AG04449 (cell line): ENCODE measurements at regions of chr4 and their contacts with region 1.

Region 1: DNA sequence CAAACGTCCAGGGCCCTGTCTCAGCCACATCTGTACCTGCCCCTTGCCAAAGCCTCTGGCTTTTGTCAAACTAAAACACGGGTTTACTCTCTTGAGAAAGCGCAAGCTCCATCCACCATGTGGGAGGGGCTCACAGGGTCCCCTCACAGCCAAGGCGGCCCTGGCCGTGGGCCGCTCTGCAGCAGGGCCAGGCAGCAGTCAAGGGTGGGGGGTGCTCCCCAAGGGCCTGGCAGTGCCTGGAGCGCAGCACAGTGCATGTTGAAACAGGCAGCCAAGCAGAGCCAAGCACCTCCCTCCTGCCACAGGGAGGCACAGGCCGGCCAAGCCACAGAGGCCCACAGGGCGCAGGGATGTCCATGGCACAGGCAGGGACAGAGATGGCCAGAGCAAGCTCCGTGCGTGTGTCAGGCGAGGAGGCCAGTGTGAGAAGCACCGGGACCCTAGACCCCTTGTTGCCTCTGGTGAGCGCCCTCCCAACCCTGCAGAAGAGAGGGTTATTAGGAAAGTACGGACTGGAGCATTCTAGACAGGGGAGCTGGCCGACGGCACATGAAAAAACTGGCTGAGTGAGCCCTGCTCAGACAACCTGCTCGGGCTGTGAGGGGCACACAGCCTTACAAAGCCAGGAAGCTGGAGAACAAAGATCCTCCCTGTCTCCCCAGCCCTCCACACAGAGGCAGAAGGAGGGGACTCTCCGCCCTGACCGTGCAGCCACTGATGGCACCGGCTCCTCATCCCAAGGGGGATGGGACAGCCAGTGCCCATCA is 39.0 kb downstream of the FAM53A start:
- DNase-seq: no peak
- H3K4me3 ChIP-seq: no peak overlapping the region
- CTCF ChIP-seq: no peak

Region 2: DNA sequence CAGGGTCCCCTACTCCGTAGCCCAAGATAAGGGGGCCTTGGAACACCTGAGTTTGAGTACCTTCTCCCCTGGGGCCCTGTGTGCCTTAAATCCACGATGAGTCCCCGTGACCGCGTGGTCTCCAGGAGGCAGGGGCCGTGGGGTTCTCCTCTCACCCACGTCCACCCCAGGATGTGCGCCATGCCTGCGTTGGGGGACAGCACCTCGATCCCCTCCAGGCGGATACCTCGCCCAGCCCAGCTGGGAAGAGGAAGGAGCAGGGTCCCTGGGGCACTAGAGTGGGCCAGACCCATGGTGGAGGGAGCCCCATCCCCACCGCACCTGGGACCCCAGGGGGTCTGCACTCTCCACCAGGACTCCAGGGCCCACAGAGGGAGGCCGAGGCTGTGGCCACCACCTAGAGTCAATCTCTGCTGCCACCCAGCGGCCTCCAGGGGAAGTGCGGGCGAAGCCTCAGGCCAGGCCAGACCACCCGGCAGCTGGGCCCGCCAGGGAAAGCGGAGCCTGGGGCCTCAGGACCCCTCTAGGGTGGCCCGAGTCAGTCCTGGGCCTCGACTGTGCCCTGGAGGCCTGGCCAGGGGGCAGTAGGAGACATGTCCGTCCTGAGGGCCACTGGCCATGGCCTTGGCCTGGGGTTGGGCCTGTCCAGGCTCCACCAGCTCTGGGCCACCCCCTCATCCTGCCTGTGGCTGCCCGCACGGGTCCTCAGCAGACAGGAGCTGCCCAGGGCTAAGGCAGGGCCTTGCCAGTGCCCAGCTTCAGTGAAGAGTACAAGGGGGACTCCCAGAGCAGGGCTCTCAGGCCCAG is 16.0 kb before region 1 on chr4:
- CTCF ChIA-PET with region 1: interaction called, 11 read pairs
- POLR2A ChIA-PET with region 1: no interaction called
- DNase-seq: no peak
- H3K4me3 ChIP-seq: no peak overlapping the region
- CTCF ChIP-seq: peak; percentile 97

Region 3: DNA sequence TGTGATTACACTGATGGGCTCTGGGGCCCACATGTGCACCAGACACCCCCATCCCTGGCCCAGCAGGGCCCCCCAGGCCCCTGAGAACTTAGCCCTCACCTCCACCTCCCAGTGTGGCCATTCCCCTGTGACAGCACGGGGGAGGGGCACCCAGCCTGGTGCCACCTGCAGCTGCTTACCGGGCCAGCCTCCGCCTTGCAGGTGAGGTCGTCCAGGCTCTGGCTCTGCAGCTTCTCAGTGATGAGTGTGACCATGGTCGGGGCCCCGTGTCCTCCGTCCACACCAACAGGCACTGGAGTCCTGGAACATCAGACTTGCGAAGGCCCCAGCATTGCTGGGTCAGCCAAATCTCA is 23.4 kb after region 1 on chr4:
- CTCF ChIA-PET with region 1: no interaction called
- POLR2A ChIA-PET with region 1: no interaction called
- DNase-seq: no peak
- H3K4me3 ChIP-seq: no peak overlapping the region
- CTCF ChIP-seq: no peak

Region 4: DNA sequence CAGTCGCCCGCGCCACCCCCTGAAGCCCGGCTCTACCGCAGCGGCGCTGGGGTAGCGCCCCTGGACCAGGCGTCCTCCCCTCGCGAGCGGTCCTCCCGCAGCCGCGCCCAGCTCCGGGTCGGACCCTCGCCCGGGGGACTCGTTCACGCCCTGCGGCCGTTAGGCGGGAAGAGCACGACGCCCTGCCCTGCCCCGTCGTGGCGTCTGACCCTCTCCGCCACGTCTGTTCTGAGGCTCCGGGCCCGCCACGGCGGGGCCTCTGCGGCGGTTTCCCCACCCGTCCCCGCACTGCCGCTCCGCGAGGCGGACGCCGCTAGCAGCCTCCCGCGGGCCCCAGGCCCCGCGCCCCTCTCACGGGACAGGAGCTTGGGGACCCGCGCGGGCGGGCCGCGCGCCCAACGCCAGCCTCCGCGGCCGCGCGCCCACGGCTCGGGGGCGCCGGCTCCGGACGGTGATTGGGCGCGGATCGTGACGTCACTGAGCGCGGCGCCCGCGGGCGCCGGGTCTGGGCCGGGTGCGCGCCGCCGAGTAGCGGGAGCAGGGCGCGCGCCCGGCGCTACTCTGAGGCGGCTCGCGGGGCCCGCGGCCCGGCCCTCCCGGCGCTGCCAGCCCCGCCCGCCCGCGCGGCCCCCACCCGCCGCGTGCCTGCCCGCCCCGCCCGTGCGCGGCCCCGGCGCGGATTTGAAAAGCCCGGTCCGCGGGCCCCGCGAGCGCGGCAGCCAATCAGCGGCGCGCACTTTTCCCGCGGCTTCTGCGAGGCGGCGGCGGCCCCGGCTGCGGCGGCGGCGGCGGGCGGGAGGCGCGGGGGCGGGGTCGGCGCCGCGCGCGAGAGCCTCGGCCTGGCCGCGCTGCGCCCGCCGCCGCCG is 225.7 kb after region 1 on chr4 and contains the start of gene NSD2:
- CTCF ChIA-PET with region 1: no interaction called
- POLR2A ChIA-PET with region 1: no interaction called
- DNase-seq: no peak
- H3K4me3 ChIP-seq: peak within 1 kb of the TSS; percentile 72
- CTCF ChIP-seq: no peak